K562 (cell line): ENCODE measurements at regions of chr19 and their contacts with region 1.

Region 1: GRCh38 chr19:51016798-51017683 is 2.5 kb downstream of the KLK10 start:
- DNase-seq: peak; percentile 80 to 85 (median 84)
- ATAC-seq: peak; percentile 91
- H3K4me3 ChIP-seq: no peak overlapping the region
- H3K27ac ChIP-seq: no peak overlapping the region
- H3K4me1 ChIP-seq: peaks cover 4 to 28% of the 10 kb centered on the region in 2 experiments
- H3K27me3 ChIP-seq: peaks cover 5 to 35% of the 10 kb centered on the region in 2 experiments; a peak in 3 of 5 replicates
- CTCF ChIP-seq: peak; percentile 89 to 94 (median 91)
- EP300 ChIP-seq: no peak
- POLR2A ChIP-seq: no peak
- RAD21 ChIP-seq: peak; percentile 45 to 74

Region 2: DNA sequence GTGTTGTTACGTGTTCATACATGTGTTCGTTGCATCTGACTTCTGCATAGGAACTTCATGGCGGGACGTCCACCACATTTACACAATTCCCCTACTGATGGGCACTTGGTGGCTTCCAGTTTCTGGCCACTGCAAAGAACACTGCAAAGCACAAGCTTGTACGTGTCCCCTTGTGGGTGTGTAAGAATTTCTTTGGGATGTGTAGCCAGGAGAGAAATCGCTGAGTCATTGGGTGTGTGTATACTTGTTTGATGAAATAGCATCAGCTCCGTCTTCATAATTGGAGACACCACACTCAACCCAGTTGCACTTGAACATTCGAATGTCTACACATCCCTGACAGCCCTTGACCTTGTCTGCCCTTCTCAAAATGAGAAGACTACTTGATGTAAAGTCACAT is 83.4 kb before region 1 on chr19:
- CTCF ChIA-PET with region 1: interaction called, 11 read pairs
- POLR2A ChIA-PET with region 1: no interaction called
- in situ Hi-C with region 1: no loop called
- intact Hi-C with region 1: loop called (anchors 2 kb)
- DNase-seq: peak in 1 of 4 experiments; percentile 51
- ATAC-seq: peak; percentile 53; the same call in 2 of the 3 replicates
- H3K4me3 ChIP-seq: no peak overlapping the region
- H3K27ac ChIP-seq: no peak overlapping the region
- H3K4me1 ChIP-seq: peaks cover 0 to 4% of the 10 kb centered on the region in 2 experiments; a peak in 2 of 5 replicates
- H3K27me3 ChIP-seq: peaks cover 0 to 14% of the 10 kb centered on the region in 2 experiments; a peak in 2 of 5 replicates
- CTCF ChIP-seq: no peak
- EP300 ChIP-seq: no peak
- POLR2A ChIP-seq: no peak
- RAD21 ChIP-seq: no peak